Gastrocnemius medialis (tissue), 4 donors: ENCODE measurements at regions of chr4 and their contacts with region 1.

Region 1: DNA sequence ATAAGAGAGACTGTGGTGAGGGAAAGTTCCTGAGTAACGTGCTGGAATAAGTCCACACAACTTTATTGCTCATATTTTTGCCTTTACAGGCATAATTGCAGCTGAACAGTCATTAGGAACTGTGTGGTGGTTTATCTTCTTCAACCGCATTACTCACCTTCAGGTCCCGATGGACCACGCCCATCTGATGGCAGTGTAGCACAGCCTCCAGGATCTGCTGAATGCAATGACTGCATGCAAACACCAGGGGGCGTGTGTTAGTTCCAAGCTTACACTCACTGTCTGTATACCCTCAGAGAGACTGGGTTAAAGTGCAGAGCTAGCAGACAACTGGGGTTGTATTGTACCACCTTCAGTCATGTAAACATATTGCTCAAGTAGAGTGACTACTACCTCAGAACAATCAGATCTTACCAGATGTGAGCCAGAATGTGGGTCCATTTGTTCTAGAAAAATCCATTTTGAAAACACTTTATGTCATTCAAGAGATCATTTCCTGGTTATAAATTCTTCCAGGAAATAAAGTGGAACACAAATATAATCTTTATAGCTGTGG is 214.0 kb downstream of the CAMK2D start:
- DNase-seq: peak; percentile 81 to 91
- ATAC-seq: peak; percentile 96 to 99
- H3K4me3 ChIP-seq: no peak overlapping the region
- H3K27ac ChIP-seq: peak overlapping the region; percentile 69 to 81 (median 78)
- H3K4me1 ChIP-seq: peaks cover 16 to 22% of the 10 kb centered on the region in 2 donors
- H3K27me3 ChIP-seq: no peaks in the 10 kb centered on the region
- CTCF ChIP-seq: peak; percentile 95 to 98 (median 96)
- POLR2A ChIP-seq: peak in 1 of 2 donors; percentile 13

Region 2: GRCh38 chr4:113584407-113585150 is 37.0 kb after region 1 on chr4:
- in situ Hi-C with region 1: no loop called
- intact Hi-C with region 1: loop called (anchors 2 kb)
- DNase-seq: peak; percentile 58 to 66
- ATAC-seq: peak; percentile 89 to 93
- H3K4me3 ChIP-seq: peak overlapping the region in 2 of 4 donors; percentile 4 to 29
- H3K27ac ChIP-seq: peak overlapping the region; percentile 88 to 91 (median 89)
- H3K4me1 ChIP-seq: peaks cover 60 to 67% of the 10 kb centered on the region in 2 donors
- H3K27me3 ChIP-seq: no peaks in the 10 kb centered on the region
- CTCF ChIP-seq: no peak
- POLR2A ChIP-seq: no peak

Region 3: GRCh38 chr4:113684534-113685091 is 137.0 kb after region 1 on chr4:
- in situ Hi-C with region 1: no loop called
- intact Hi-C with region 1: loop called (anchors 2 kb)
- DNase-seq: peak; percentile 61 to 88
- ATAC-seq: peak; percentile 97 to 98
- H3K4me3 ChIP-seq: no peak overlapping the region
- H3K27ac ChIP-seq: peak overlapping the region; percentile 75 to 80 (median 78)
- H3K4me1 ChIP-seq: peaks cover 39 to 50% of the 10 kb centered on the region in 2 donors
- H3K27me3 ChIP-seq: no peaks in the 10 kb centered on the region
- CTCF ChIP-seq: peak; percentile 28 to 73 (median 58)
- POLR2A ChIP-seq: peak in 1 of 2 donors; percentile 20

Region 4: DNA sequence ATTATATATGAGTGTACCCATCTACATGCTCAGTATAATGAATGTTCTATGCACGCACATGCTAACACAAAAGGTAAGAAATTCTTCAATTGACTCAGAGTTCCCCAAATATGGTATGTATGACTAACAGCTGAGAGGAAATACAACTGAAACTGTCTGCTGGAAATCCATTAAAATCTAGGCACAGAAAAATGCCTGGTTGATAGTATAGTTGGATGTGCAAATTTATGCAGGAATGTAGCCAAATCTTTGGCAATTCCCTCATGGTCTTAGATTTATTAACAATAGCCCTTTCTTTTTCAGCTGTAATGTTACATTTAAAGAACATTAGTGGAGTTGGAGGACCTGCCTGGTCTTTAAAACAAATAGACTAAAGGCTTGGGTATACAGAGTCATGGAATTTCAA is 208.4 kb after region 1 on chr4:
- in situ Hi-C with region 1: loop called (anchors 5 to 10 kb)
- intact Hi-C with region 1: loop called (anchors 1 kb)
- DNase-seq: no peak
- ATAC-seq: no peak
- H3K4me3 ChIP-seq: no peak overlapping the region
- H3K27ac ChIP-seq: no peak overlapping the region
- H3K4me1 ChIP-seq: peaks cover 37 to 40% of the 10 kb centered on the region in 2 donors
- H3K27me3 ChIP-seq: no peaks in the 10 kb centered on the region
- CTCF ChIP-seq: no peak
- POLR2A ChIP-seq: no peak

Region 5: GRCh38 chr4:114077610-114078009 is 530.0 kb after region 1 on chr4:
- in situ Hi-C with region 1: no loop called
- intact Hi-C with region 1: loop called (anchors 10 kb)
- DNase-seq: no peak
- ATAC-seq: no peak
- H3K4me3 ChIP-seq: no peak overlapping the region
- H3K27ac ChIP-seq: no peak overlapping the region
- H3K4me1 ChIP-seq: no peaks in the 10 kb centered on the region
- H3K27me3 ChIP-seq: no peaks in the 10 kb centered on the region
- CTCF ChIP-seq: no peak
- POLR2A ChIP-seq: no peak